ENCODE measurements at regions of chr12 and their contacts with region 1.

Region 1: DNA sequence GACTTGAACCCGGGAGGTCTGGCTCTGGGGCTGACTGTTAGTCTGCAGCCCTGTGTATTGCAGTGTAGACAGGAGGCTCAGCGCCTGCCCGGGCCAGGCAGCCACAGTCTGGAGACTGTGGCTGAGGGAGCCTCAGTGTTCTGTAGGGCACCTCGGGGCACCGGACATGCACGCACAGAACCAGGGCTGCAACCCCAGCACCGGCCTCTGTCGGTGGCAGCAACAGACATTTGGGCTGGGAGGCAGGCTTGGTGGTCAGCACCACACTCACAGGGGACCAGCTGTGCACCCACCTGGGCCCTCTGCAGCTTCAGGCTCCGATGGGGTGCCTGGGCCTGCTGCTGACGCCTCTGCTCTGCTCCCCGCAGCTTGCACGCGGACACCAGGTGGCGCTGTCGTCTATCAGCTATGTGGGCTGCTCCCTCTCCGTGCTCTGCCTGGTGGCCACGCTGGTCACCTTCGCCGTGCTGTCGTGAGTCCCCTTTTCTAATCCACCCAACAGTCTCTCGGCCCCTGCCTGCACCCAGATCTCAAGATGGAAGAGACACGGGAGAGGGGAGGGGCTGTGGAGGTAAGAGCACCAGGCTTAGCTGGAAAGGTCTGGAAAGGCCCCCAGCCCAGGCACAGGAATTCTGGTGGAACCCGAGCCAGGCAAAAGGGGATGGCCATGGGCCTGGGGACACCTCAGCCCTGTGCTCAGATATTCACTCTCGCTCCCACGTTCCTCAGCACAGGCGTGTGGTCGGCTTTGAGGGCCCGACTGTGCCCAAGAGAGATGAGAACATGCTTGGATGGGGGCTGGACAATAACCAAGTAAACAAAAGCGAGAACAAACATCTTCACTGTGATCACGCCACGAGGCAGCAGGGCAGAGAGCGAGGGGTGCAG is 151.0 kb downstream of the ADGRD1 start:
- DNase-seq: peak; percentile 74 to 94 (median 90)
- H3K4me3 ChIP-seq: peak overlapping the region in 5 of 59 donors; percentile 10 to 28 (median 21)
- H3K27ac ChIP-seq: peak overlapping the region in 52 of 59 donors; percentile 20 to 88 (median 68)
- H3K27me3 ChIP-seq: peaks cover 0 to 3% (median 0%) of the 10 kb centered on the region in 45 donors
- CTCF ChIP-seq: peak; percentile 78 to 99 (median 96)

Region 2: DNA sequence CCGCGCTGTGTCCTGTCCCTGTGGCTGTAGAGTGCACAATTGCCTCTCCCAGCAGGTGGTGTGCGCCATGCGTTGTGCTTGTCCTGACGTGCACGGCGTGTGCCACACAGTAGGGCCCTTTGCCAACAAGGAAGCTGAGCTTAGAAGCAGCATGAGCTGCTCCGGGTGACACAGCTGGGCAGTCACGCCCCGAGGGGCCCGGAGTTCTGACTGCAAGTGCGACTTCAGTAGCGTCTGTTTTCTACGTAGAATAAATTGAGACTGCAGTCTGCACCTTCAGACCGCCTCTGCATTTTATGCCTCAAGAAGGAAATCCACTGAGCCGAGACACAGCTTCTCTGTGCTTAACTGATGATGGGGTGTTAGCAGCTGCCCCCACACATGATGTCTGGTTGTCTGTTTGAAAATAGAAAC is 69.4 kb before region 1 on chr12:
- intact Hi-C with region 1: no loop called
- DNase-seq: peak in 5 of 10 donors; percentile 34 to 68 (median 44)
- H3K4me3 ChIP-seq: no peak overlapping the region
- H3K27ac ChIP-seq: peak overlapping the region in 5 of 59 donors; percentile 6 to 18 (median 13)
- H3K27me3 ChIP-seq: peaks cover 0 to 22% (median 0%) of the 10 kb centered on the region in 45 donors
- CTCF ChIP-seq: no peak

Region 3: GRCh38 chr12:131608740-131609690 is 504.3 kb after region 1 on chr12:
- intact Hi-C with region 1: loop called in 1 of 2 experiments (anchors 5 kb)
- DNase-seq: peak; percentile 81 to 89 (median 86)
- H3K4me3 ChIP-seq: peak overlapping the region in 23 of 59 donors; percentile 1 to 43 (median 13)
- H3K27ac ChIP-seq: peak overlapping the region in 40 of 59 donors; percentile 0 to 75 (median 52)
- H3K27me3 ChIP-seq: no peaks in the 10 kb centered on the region
- CTCF ChIP-seq: peak; percentile 69 to 99 (median 94)

Region 4: GRCh38 chr12:132003846-132004245 is 899.1 kb after region 1 on chr12:
- intact Hi-C with region 1: loop called in 1 of 2 experiments (anchors 5 kb)
- DNase-seq: no peak
- H3K4me3 ChIP-seq: no peak overlapping the region
- H3K27ac ChIP-seq: no peak overlapping the region
- H3K27me3 ChIP-seq: no peaks in the 10 kb centered on the region
- CTCF ChIP-seq: no peak

Measured in dorsolateral prefrontal cortex (tissue), 120 donors.